ENCODE measurements at regions of chr2 and their contacts with region 1.

Region 1: GRCh38 chr2:109128048-109128465 is 948 bp upstream of the SH3RF3 start:
- DNase-seq: peak; percentile 97

Region 2: DNA sequence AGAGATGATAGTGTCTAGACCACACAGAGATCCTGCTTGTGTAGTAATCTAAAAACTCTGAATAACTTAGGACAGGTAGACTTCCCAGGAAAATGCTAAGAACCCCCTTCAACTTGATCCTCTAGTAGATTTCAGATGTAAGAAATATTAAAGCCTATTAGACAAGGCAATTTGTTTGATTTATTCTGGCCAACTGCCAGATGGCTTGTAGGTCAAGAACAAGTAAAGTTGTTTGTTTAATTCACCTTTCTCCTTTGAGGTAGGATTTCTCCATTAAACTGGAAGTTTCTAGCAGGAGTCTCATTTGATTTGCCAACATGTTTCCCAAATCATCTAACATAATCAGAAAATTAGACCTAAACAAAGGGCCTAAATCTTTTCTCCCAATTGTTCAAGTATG is 49.6 kb after region 1 on chr2:
- intact Hi-C with region 1: loop called in 1 of 2 experiments (anchors 2 kb)
- DNase-seq: no peak

Region 3: GRCh38 chr2:109193807-109194619 is 66.0 kb after region 1 on chr2:
- intact Hi-C with region 1: no loop called
- DNase-seq: no peak

Region 4: DNA sequence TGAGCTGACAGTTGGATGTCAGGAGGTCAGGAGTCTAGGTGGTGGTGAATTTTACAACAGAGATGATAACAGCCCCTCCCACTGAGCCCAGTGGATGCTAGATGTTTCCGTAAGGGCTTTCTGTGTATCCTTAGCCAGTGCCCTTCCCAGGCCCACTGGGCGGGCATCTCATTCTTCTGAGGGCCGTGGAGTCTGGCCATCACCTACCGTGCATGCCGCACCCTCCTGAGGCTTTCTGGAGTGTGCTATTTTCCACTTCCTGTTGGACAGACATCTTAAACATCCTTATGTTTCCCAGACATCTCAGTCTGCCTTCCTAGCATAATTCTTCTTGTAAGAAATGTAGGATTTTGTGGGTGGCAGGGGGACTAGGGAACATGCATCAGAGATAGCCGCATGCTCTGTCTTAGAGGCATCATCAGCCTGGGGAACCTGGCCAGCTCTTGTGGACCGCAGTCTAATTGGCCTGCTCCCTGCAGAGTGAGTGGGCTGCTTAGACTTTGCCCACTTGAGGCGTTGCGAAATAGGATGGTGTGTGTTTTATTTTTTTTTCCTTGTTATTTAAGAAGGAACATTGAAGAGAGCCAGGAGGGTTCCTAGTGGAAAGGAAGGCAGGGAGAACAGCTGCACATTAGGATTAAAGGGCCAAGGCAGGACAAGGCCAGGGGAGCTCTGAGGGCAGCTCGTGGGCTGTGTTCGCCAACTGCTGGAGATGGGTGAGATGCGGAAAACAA is 136.7 kb after region 1 on chr2:
- intact Hi-C with region 1: no loop called
- DNase-seq: no peak

Region 5: DNA sequence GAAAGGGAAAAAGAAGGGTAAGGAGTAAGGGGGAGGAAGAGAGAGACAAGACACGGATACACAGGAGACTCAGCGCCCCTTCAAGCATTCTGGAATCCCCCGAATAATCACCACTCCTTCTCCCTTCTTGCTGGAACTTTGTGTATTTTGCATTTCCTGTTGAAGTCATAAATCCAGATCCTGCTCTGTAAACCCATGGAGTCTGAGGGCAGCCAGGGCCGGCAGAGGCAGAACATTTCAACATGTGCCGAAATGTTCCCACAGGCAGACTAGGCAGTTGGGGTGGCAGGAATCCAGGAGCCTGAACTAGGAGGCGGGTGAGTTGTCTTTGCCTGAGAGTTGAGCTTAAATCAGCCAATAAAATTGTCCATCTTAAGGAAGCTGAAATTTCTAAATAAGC is 194.1 kb after region 1 on chr2:
- intact Hi-C with region 1: loop called in 1 of 2 experiments (anchors 2 kb)
- DNase-seq: peak; percentile 96

Region 6: GRCh38 chr2:109438773-109439389 is 310.8 kb after region 1 on chr2:
- intact Hi-C with region 1: loop called in 1 of 2 experiments (anchors 5 kb)
- DNase-seq: peak; percentile 79

Region 7: DNA sequence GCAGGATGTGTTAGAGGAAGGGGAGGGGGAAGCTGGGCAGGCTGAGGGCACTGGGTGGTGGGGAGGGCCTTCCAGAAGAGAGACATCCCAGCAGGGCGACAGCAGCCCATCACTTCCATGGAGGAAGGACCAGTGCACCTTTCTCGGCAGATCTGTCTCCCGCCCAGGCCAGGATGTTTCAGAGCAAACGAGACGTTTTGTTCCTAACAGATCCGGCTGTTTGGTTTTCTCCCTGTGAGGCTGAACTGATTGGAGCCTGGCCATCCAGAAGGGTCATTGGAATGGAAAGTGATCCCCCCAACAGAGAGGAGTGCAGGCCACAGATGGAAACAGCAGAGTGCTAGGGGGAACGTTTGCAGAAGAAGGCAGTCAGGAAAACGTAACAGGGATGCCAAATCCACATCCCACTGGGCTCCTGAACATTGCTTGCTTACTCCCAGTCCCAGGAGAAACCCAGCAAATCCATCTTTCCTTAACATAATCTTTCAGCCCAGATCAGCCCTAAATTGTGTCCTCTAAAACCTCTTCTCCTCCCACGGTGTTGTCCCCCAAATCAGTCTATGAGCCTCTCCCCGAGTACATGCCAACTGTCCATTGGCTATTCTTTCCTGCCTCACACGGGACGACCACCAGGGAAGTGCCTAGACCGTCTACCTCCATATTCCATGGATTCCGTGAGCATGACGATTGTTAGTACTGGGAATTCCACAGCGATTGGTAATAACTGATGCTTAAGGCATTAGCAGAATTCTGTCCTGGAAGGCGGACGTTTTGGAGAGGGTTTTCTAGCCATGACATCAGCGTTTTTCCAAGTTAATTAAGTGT is 358.9 kb after region 1 on chr2:
- intact Hi-C with region 1: loop called in 1 of 2 experiments (anchors 5 kb)
- DNase-seq: peak; percentile 50

Region 8: GRCh38 chr2:109510136-109511028 is 382.3 kb after region 1 on chr2:
- intact Hi-C with region 1: loop called (anchors 1 to 5 kb)
- DNase-seq: peak; percentile 93

Region 9: DNA sequence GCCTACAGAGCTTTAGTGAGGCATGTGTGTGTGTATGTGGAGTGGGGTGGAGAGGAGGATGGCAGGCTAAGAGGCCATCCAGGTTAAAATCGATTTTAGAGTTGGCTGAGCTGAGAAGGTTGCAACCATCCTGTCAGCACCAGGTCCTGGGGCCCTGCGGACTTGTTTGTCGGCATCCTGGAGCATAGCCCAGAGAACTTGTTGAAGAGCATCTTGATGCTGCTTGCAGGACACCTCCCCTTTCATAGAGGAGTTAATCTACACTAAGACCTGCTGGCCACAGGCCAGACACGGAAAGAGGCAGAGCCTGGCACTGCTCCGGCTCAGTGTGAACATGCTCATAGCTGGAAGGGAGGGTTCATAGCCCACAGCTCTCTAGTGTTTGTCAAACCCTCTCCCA is 594.0 kb after region 1 on chr2:
- intact Hi-C with region 1: loop called in 1 of 2 experiments (anchors 10 kb)
- DNase-seq: peak; percentile 37